Right ventricle myocardium superior (tissue), 1 donor: ENCODE measurements at regions of chr21 and their contacts with region 1.

Region 1: DNA sequence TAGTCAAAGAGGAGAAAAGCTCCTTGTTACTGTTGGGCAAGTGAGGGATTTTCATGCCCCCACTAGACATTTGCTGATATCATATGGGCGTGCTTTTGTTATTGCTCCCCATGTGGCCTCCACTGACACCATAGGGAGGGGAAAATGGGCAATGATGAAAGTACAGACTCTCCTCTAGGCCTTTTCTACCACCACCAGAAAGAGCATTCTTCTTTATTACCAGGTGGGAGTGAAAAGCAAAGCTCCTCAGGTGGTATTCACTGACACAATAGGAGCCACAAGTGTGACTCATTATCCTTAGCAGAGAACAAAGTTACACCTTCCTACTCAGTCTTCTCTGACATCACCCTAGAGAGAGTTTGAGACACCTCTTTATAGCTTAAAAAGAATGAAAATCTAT is 667.1 kb downstream of the LTN1 start:
- DNase-seq: no peak
- ATAC-seq: no peak

Region 2: DNA sequence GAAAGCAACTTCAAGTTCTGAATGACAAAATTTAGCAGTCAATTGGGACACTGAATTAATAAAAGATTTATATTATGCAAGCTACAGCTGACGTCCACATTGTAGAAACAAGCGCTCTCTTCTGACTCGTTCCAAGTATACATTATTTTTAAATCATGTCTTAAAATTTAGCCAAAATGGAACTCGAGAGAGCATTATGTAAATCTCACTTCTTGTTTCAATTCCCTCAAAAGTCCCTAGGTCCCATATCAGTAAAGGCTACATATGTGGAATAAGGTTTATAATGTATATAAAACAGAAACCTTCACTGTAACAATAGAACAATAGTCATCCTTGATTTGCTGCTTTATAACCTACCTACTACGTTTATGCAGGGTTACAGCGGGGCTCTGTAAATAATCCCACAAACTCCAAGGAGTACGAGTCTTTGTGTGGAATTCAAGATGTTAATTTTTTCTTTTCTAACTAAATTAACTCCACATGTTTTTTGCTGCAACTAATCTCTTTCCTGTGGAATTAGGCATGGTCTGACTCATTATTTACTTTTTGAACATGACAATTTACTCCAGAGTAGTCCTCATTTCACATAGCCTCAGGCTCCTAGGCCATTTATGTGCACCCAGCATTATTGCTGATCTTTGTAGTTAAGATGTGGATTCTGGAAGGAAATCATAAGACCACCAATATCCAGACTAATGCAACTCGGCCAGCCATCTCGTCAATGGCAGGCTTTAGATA is 118.0 kb before region 1 on chr21:
- intact Hi-C with region 1: no loop called
- DNase-seq: no peak
- ATAC-seq: peak; percentile 61

Region 3: DNA sequence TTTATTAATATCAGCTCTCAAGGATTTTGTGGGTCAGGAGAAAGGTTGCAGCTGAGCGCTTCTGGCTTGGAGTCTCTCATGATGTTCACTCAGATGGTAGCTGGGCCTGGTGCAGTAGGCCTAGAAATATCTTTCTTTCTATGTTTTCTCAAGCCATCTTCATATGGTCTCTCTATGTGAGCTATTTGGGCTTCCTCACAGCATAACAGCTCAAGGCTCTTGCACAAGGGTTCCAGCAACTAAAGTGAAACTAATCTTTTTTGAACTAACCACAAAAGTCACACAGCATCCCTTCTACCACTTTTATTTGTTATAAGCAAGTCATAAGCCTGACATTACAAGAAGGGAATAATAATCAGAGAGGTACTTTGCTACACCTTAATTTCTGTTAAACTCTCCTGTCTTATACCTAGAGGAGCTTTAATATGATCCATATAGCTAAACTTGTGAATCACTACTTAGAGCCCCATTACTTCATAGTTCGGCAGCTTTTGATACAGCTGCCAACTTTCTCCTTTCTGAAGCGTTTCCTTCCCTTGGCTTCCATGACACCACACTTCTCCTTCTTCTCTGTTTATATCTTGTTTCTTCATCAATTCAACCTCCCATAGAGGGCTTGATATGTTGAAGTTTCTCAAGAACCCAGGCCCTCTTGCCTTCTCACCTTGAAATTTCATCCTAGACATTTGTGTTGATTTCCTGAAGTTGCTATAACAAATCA is 53.2 kb before region 1 on chr21:
- intact Hi-C with region 1: loop called (anchors 2 kb)
- DNase-seq: no peak
- ATAC-seq: no peak

Region 4: GRCh38 chr21:28663111-28663693 is 337.6 kb after region 1 on chr21:
- intact Hi-C with region 1: no loop called
- DNase-seq: no peak
- ATAC-seq: no peak